ENCODE measurements at regions of chr3 and their contacts with region 1.

Region 1: GRCh38 chr3:56453011-56453410 is 15.3 kb downstream of the ERC2 start:
- DNase-seq: peak; percentile 28
- H3K4me3 Mint-ChIP-seq: no peak overlapping the region
- H3K27ac Mint-ChIP-seq: no peak overlapping the region
- H3K4me1 Mint-ChIP-seq: no peaks in the 10 kb centered on the region
- H3K27me3 Mint-ChIP-seq: peaks cover 63% of the 10 kb centered on the region
- CTCF ChIP-seq: no peak

Region 2: DNA sequence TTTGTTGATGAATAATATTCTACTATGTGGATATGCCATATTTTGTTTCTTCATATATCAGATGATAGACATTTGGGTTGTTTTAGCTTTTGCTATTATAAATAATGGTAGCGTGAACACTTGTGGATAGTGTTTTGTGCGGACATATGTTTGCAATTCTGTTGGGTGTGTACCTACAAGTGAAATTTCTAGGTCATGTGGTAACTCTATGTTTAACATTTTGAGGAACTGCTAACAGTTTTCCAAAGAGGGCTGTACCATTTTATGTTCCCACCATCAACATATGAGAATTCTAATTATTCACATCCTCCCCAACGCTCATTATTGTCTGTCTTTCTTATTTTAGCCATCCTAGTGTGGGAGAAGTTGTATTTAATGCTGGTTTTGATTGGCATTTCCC is 288.6 kb before region 1 on chr3:
- CTCF ChIA-PET with region 1: no interaction called
- POLR2A ChIA-PET with region 1: no interaction called
- intact Hi-C with region 1: loop called (anchors 5 kb)
- DNase-seq: no peak
- H3K4me3 Mint-ChIP-seq: no peak overlapping the region
- H3K27ac Mint-ChIP-seq: no peak overlapping the region
- H3K4me1 Mint-ChIP-seq: no peaks in the 10 kb centered on the region
- H3K27me3 Mint-ChIP-seq: no peaks in the 10 kb centered on the region
- CTCF ChIP-seq: no peak

Region 3: GRCh38 chr3:56282341-56282740 is 170.7 kb before region 1 on chr3:
- CTCF ChIA-PET with region 1: no interaction called
- POLR2A ChIA-PET with region 1: no interaction called
- intact Hi-C with region 1: no loop called
- DNase-seq: no peak
- H3K4me3 Mint-ChIP-seq: no peak overlapping the region
- H3K27ac Mint-ChIP-seq: no peak overlapping the region
- H3K4me1 Mint-ChIP-seq: peaks cover 20% of the 10 kb centered on the region
- H3K27me3 Mint-ChIP-seq: no peaks in the 10 kb centered on the region
- CTCF ChIP-seq: no peak

Region 4: DNA sequence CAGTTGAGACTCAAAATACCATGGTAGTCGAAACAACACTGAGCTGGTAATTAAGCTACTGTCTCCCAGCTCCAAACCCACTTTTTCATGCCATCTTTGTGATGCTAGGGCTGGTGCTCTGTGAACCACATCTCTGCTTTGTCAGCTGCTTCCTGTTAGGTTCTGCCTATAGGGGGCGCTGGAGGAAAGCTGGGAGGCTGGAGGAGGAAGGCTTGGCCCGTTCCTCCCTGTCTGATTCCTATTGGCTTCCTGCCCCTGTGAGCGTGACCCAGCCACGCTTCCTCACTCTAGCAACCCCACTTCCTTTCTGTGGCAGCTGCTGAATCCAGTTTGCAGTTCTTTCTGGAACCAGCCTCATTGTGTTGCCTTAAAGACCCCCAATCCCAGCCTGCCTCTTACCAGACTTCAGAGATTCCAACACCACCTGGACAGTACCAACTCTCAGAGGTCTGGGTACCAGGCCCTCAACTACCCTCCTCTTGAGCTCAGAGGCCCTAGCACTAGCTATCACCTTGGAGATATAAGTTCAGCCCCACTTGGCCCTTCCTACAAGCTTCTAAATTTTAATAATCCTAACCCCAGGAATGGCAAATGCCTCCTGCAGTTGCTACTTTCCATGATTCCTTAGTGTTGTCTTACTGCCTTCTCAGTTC is 105.7 kb before region 1 on chr3:
- CTCF ChIA-PET with region 1: interaction called, 133 read pairs
- POLR2A ChIA-PET with region 1: no interaction called
- intact Hi-C with region 1: no loop called
- DNase-seq: peak; percentile 63
- H3K4me3 Mint-ChIP-seq: no peak overlapping the region
- H3K27ac Mint-ChIP-seq: no peak overlapping the region
- H3K4me1 Mint-ChIP-seq: peaks cover 6% of the 10 kb centered on the region
- H3K27me3 Mint-ChIP-seq: peaks cover 37% of the 10 kb centered on the region
- CTCF ChIP-seq: no peak

Region 5: DNA sequence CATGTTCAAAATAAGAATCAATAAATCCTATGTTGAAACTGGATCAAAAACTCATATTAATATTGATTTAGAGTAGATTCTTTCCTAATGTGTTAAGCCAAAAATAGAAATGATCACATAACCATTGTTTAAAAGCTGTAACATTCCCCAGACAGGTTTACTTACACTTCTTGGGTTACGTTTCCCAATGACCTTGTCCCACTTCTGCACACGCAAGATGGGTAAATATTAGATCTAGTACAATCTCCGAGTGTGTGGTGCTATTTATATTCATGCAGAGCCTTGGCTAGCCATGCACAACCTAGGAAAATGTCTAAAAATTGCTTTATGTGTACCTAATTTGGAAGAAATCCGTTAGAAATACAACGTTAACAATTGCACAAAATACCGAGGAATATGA is 24.3 kb before region 1 on chr3:
- CTCF ChIA-PET with region 1: interaction called, 16 read pairs
- POLR2A ChIA-PET with region 1: interaction called, 3 read pairs
- intact Hi-C with region 1: no loop called
- DNase-seq: no peak
- H3K4me3 Mint-ChIP-seq: no peak overlapping the region
- H3K27ac Mint-ChIP-seq: no peak overlapping the region
- H3K4me1 Mint-ChIP-seq: no peaks in the 10 kb centered on the region
- H3K27me3 Mint-ChIP-seq: no peaks in the 10 kb centered on the region
- CTCF ChIP-seq: no peak

Region 6: DNA sequence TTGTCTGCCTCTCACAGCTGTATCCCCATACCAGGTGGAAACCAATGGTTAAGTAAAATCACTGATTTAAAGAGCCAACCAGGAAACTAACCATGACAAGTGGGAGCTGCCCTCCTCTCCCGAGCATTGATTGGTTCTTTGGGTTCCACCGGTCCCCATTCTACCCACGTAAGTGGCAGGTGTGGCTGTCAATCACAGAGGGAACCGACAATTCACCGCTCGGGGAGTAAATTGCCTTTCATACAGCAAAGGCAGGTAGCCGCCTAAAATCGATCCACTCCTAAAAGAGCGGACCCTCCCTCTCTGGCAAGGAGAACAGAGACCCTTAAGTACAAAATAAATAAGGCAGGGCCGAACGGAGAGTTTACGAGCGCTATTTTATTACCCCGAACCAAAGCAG is 14.1 kb after region 1 on chr3:
- CTCF ChIA-PET with region 1: interaction called, 18 read pairs
- POLR2A ChIA-PET with region 1: no interaction called
- intact Hi-C with region 1: no loop called
- DNase-seq: peak; percentile 95
- H3K4me3 Mint-ChIP-seq: peak overlapping the region; percentile 76
- H3K27ac Mint-ChIP-seq: no peak overlapping the region
- H3K4me1 Mint-ChIP-seq: no peaks in the 10 kb centered on the region
- H3K27me3 Mint-ChIP-seq: peaks cover 60% of the 10 kb centered on the region
- CTCF ChIP-seq: no peak

Region 7: GRCh38 chr3:56590814-56591213 is 137.8 kb after region 1 on chr3:
- CTCF ChIA-PET with region 1: no interaction called
- POLR2A ChIA-PET with region 1: no interaction called
- intact Hi-C with region 1: no loop called
- DNase-seq: no peak
- H3K4me3 Mint-ChIP-seq: no peak overlapping the region
- H3K27ac Mint-ChIP-seq: peak overlapping the region; percentile 76
- H3K4me1 Mint-ChIP-seq: no peaks in the 10 kb centered on the region
- H3K27me3 Mint-ChIP-seq: no peaks in the 10 kb centered on the region
- CTCF ChIP-seq: no peak